Heart right ventricle (tissue), 16 donors: ENCODE measurements at regions of chr10 and their contacts with region 1.

Region 1: GRCh38 chr10:75401569-75402485 is at the start of gene ZNF503:
- DNase-seq: peak; percentile 95 to 97
- ATAC-seq: peak; percentile 78 to 93 (median 90)
- H3K4me3 ChIP-seq: peak within 1 kb of the TSS; percentile 85 to 98 (median 90)
- H3K27ac ChIP-seq: peak within 1 kb of the TSS; percentile 85 to 99 (median 94)
- H3K4me1 ChIP-seq: peaks cover 5 to 62% (median 44%) of the 10 kb centered on the region in 9 donors
- H3K27me3 ChIP-seq: peaks cover 0 to 64% (median 34%) of the 10 kb centered on the region in 7 donors
- CTCF ChIP-seq: peak in 5 of 9 donors; percentile 9 to 42 (median 29)
- total RNA-seq, gene ZNF503: 2.5 to 9.7 (median 4.1) TPM

Region 2: DNA sequence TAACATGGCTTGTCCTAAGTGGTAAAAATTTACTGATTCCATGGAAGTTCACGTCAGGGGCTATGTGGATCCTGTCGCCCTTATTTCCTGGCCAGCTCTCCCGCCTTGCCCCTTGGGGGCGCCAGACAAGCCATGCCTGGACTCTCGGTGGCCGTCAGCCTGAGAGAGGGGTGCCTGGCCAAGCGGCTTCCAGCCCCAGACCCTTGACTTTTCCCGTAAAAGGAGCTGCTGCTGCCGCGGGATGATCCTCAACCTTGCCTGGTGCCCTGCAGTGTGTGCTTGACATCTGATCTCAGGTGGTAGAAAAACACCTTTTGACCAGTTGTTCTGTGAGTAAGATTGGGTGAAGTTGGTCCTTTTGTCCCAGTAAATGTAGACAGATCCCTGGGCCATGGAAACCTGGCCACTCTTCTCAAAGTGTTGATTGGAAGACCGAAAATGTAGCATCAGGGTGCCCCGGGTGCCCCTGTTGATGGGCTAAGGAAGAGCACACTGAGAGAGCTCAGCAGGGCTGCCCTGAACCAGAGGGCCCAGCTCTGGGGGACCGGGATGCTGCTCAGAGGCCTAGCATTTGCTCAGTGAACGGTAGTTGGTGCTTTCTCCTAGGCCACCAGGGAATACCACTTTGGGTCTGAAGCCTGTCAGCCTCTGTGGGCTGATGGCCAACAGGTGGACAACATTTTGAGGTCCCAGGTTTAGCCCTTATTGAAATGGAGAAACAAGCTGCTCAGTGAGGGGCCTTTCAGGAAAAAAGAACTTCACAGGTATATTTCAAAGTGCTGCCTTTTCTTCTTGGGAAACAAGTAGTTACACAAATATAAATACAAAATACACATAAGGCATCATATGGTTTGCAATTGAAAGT is 192.1 kb after region 1 on chr10:
- intact Hi-C with region 1: loop called in 3 of 10 experiments (anchors 2 to 10 kb)
- DNase-seq: no peak
- ATAC-seq: peak in 1 of 8 donors; percentile 35
- H3K4me3 ChIP-seq: no peak overlapping the region
- H3K27ac ChIP-seq: peak overlapping the region in 1 of 10 donors; percentile 80
- H3K4me1 ChIP-seq: peaks cover 0 to 24% (median 2%) of the 10 kb centered on the region in 9 donors
- H3K27me3 ChIP-seq: no peaks in the 10 kb centered on the region
- CTCF ChIP-seq: peak in 3 of 9 donors; percentile 11 to 27 (median 20)

Region 3: GRCh38 chr10:75672841-75673240 is 271.0 kb after region 1 on chr10:
- intact Hi-C with region 1: loop called in 1 of 10 experiments (anchors 10 kb)
- DNase-seq: no peak
- ATAC-seq: no peak
- H3K4me3 ChIP-seq: no peak overlapping the region
- H3K27ac ChIP-seq: no peak overlapping the region
- H3K4me1 ChIP-seq: peaks cover 0 to 7% (median 0%) of the 10 kb centered on the region in 9 donors
- H3K27me3 ChIP-seq: no peaks in the 10 kb centered on the region
- CTCF ChIP-seq: no peak

Region 4: GRCh38 chr10:75916906-75917305 is 515.1 kb after region 1 on chr10:
- intact Hi-C with region 1: loop called in 4 of 10 experiments (anchors 5 to 10 kb)
- DNase-seq: no peak
- ATAC-seq: no peak
- H3K4me3 ChIP-seq: no peak overlapping the region
- H3K27ac ChIP-seq: no peak overlapping the region
- H3K4me1 ChIP-seq: peaks cover 0 to 18% (median 10%) of the 10 kb centered on the region in 9 donors
- H3K27me3 ChIP-seq: no peaks in the 10 kb centered on the region
- CTCF ChIP-seq: no peak

Region 5: DNA sequence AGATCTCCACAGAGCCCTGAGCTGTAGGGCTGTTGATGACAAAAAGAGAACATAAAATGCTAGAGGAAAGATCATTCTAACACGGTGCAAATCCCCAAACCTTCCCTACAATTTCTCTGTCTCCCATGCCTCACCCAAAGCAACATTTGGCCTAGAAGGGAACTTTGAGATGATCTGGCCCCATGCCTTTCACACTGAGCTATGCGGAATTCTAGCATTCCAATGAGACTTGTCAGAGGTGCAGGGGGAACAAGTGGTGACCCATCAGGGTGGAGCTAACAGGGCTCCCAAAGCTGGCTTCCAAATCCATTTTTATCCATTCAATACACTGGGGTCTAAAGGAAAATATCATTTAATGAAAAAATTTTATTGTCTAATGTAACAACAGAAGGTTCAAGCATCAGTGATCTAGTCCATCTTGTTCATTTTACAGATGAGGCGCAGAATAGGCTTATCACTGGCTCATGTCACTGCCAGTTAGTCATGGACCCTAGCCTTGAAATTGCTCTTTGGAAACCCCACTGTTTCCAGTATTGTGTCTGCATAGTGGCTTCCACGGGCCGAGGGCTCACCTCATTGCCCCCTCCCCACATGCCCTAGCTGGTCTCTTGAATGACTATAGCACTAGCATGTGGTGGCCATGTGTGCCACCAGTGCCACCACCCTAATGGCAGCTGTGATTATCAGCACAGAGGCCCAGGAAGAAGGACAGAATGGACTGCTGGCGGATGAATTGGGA is 1030.6 kb after region 1 on chr10:
- intact Hi-C with region 1: loop called in 2 of 10 experiments (anchors 10 kb)
- DNase-seq: peak; percentile 14 to 48
- ATAC-seq: peak in 7 of 8 donors; percentile 28 to 71 (median 47)
- H3K4me3 ChIP-seq: no peak overlapping the region
- H3K27ac ChIP-seq: peak overlapping the region; percentile 46 to 89 (median 82)
- H3K4me1 ChIP-seq: peaks cover 22 to 85% (median 67%) of the 10 kb centered on the region in 9 donors
- H3K27me3 ChIP-seq: no peaks in the 10 kb centered on the region
- CTCF ChIP-seq: no peak

Region 6: GRCh38 chr10:77004917-77005564 is 1603.2 kb after region 1 on chr10:
- intact Hi-C with region 1: loop called in 1 of 10 experiments (anchors 10 kb)
- DNase-seq: peak in 1 of 2 donors; percentile 54
- ATAC-seq: peak; percentile 68 to 83 (median 77)
- H3K4me3 ChIP-seq: no peak overlapping the region
- H3K27ac ChIP-seq: no peak overlapping the region
- H3K4me1 ChIP-seq: peaks cover 0 to 5% (median 0%) of the 10 kb centered on the region in 9 donors
- H3K27me3 ChIP-seq: peaks cover 0 to 5% (median 0%) of the 10 kb centered on the region in 7 donors
- CTCF ChIP-seq: peak; percentile 58 to 87 (median 79)